Thyroid gland (tissue), 4 donors: ENCODE measurements at regions of chr18 and their contacts with region 1.

Region 1: GRCh38 chr18:11851146-11851805 is at the start of gene CHMP1B:
- DNase-seq: peak; percentile 98 to 99
- H3K4me3 ChIP-seq: peak within 1 kb of the TSS; percentile 74 to 100 (median 93)
- H3K27ac ChIP-seq: peak within 1 kb of the TSS; percentile 95 to 96 (median 95)
- H3K4me1 ChIP-seq: peaks cover 16 to 27% of the 10 kb centered on the region in 2 donors
- H3K27me3 ChIP-seq: no peaks in the 10 kb centered on the region
- CTCF ChIP-seq: peak in 3 of 6 experiments; percentile 9 to 20 (median 11)
- POLR2A ChIP-seq: peak; percentile 97 to 99
- total RNA-seq, gene CHMP1B: 75.4 to 99.5 (median 85.9) TPM

Region 2: DNA sequence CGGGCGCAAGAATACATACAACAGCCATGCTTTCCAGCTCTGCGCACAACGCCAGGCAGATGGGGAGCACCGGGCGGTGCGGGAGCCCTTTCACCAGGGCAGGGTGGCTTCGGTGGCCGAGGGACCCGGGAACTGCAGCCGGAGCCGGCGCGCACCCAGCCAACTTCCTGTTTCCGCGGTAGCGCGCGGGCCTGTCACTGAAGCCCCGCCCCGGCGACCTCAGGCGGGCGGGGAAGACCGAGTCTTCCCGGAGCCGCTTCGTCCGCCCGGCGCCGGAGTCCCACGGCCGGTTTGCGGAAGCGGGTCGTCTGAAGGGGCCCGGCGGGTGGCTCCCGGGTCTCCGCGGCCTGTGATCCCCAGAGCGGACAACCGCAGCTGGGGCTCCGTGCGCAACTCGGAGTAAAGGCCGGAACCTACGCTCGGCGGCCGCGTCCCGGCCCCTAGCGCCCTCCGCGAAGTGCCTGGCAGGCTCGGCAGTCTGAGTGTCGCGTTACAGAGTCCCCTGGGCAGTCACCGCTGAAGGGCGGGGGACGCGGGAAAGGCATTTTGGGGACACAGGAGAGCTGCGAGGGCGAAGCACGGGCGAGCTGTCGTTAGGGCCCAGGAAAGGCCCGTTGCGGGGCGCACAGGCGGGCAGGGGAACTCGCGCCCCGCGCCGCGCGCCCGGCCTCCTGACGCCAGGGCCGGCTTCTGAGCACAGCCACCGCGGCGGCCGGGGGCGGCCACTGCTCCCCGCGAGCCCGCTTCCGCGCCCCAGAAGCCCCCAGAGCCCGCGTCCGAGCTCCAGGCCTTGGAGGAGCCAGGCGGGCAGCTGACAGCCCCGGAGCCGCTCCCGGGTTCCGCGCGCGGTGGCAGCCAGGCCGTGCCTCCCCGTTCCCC is 57.1 kb after region 1 on chr18 and contains the start of gene MPPE1:
- intact Hi-C with region 1: loop called (anchors 10 kb)
- DNase-seq: peak; percentile 91
- H3K4me3 ChIP-seq: peak within 1 kb of the TSS; percentile 18 to 77 (median 65)
- H3K27ac ChIP-seq: peak within 1 kb of the TSS; percentile 98 to 99 (median 99)
- H3K4me1 ChIP-seq: peaks cover 20 to 24% of the 10 kb centered on the region in 2 donors
- H3K27me3 ChIP-seq: no peaks in the 10 kb centered on the region
- CTCF ChIP-seq: peak in 1 of 6 experiments; percentile 8
- POLR2A ChIP-seq: peak; percentile 71 to 96
- total RNA-seq, gene MPPE1: 50.0 to 111 (median 76.7) TPM

Region 3: GRCh38 chr18:11955239-11956029 is 104.2 kb after region 1 on chr18:
- intact Hi-C with region 1: no loop called
- DNase-seq: peak; percentile 60 to 74
- H3K4me3 ChIP-seq: no peak overlapping the region
- H3K27ac ChIP-seq: peak overlapping the region in 2 of 3 donors; percentile 64 to 71
- H3K4me1 ChIP-seq: peaks cover 7 to 12% of the 10 kb centered on the region in 2 donors
- H3K27me3 ChIP-seq: no peaks in the 10 kb centered on the region
- CTCF ChIP-seq: no peak
- POLR2A ChIP-seq: no peak

Region 4: GRCh38 chr18:12027046-12027445 is 175.8 kb after region 1 on chr18:
- intact Hi-C with region 1: loop called (anchors 10 kb)
- DNase-seq: peak; percentile 78 to 89
- H3K4me3 ChIP-seq: no peak overlapping the region
- H3K27ac ChIP-seq: peak overlapping the region; percentile 76 to 93 (median 85)
- H3K4me1 ChIP-seq: peaks cover 13 to 45% of the 10 kb centered on the region in 2 donors
- H3K27me3 ChIP-seq: no peaks in the 10 kb centered on the region
- CTCF ChIP-seq: no peak
- POLR2A ChIP-seq: no peak

Region 5: DNA sequence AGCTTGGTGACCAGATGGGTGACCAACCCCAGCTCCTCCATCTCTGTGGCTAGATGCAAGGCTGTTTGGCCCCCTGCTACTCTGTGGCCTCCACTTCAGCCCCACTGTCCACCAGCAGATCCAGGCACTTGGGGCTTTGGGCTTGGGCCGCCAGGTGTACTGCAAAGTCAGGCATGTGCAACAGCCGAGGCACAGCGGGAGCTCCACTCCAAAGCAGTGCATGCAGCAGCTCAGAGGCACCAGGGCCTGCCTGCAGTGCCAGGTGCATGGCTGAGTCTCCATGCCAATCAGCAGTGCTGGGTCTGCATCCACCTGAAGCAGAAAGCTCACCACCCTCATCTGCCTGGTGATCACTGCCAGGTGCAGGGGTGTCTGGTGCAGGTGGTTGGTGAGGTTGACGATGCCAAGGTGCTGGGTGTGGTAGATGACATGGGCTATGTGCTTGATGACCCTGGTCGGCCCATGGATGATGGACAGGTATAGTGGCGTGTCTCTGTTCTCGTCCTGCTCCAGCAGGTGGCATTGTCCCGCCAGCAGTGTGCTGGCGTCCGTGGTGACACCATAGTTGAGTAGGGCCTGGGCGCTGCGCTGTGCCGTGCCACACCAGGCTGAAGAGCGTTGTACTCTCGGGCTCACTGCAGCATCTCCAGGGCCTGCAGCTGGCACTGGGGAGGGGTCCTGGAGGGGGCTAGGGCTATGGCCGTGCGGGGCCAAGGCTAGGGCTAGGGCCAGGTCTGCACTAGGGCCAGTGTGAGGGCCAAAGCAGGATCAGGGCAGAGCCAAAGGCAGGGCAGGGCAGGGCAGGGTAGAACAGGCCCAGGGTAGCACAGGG is 241.3 kb after region 1 on chr18:
- intact Hi-C with region 1: no loop called
- DNase-seq: peak; percentile 21 to 55
- H3K4me3 ChIP-seq: no peak overlapping the region
- H3K27ac ChIP-seq: no peak overlapping the region
- H3K4me1 ChIP-seq: no peaks in the 10 kb centered on the region
- H3K27me3 ChIP-seq: no peaks in the 10 kb centered on the region
- CTCF ChIP-seq: peak in 4 of 6 experiments; percentile 3 to 48 (median 32)
- POLR2A ChIP-seq: no peak